ENCODE measurements at regions of chr21 and their contacts with region 1.

Region 1: GRCh38 chr21:33078907-33079582 is 9.1 kb downstream of the OLIG1 start:
- DNase-seq: peak; percentile 86
- ATAC-seq: peak; percentile 94
- H3K4me3 ChIP-seq: no peak overlapping the region
- H3K27ac ChIP-seq: 0 out of 2 replicates have a peak overlapping the region, but pooled peaks have one; percentile 0
- H3K4me1 ChIP-seq: peaks cover 12% of the 10 kb centered on the region
- H3K27me3 ChIP-seq: peaks cover 10% of the 10 kb centered on the region
- CTCF ChIP-seq: no peak; the same call in 1 of the 2 replicates

Region 2: GRCh38 chr21:32940079-32941014 is 138.7 kb before region 1 on chr21:
- CTCF ChIA-PET with region 1: no interaction called
- POLR2A ChIA-PET with region 1: no interaction called
- intact Hi-C with region 1: no loop called
- DNase-seq: peak; percentile 69
- ATAC-seq: peak; percentile 80; the same call in 1 of the 2 replicates
- H3K4me3 ChIP-seq: no peak overlapping the region
- H3K27ac ChIP-seq: no peak overlapping the region
- H3K4me1 ChIP-seq: no peaks in the 10 kb centered on the region
- H3K27me3 ChIP-seq: peaks cover 68% of the 10 kb centered on the region
- CTCF ChIP-seq: peak; percentile 90

Region 3: DNA sequence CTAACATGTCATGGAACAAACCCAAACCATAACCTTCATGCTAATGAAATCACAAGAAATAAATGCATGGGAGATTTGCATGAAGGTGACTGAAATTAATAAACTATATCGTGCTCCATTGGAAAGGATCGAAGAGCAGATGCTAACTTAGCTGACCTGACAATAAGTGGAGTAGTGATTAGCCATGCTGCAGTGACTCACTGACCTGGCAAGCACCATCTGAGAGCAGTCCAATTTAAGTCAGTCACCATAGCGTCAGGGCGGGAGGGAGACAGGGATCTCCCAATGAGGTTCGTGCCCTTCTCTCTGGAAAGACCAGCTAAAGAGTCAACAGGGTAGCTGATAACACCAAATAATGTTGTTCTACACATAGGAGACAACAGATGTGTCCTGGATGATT is 31.8 kb before region 1 on chr21:
- CTCF ChIA-PET with region 1: no interaction called
- POLR2A ChIA-PET with region 1: no interaction called
- intact Hi-C with region 1: loop called (anchors 1 kb)
- DNase-seq: peak; percentile 59
- ATAC-seq: peak; percentile 90
- H3K4me3 ChIP-seq: no peak overlapping the region
- H3K27ac ChIP-seq: no peak overlapping the region
- H3K4me1 ChIP-seq: peaks cover 11% of the 10 kb centered on the region
- H3K27me3 ChIP-seq: peaks cover 48% of the 10 kb centered on the region
- CTCF ChIP-seq: no peak

Measured in PC-3 (cell line).